Caco-2 (cell line): ENCODE measurements at regions of chrX and their contacts with region 1.

Region 1: GRCh38 chrX:128518508-128518907 is 466.3 kb upstream of the ACTRT1 start:
- DNase-seq: peak in 1 of 2 experiments; percentile 3
- H3K4me3 ChIP-seq: no peak overlapping the region
- H3K4me3 Mint-ChIP-seq: no peak overlapping the region
- H3K27ac Mint-ChIP-seq: no peak overlapping the region
- H3K4me1 ChIP-seq: no peaks in the 10 kb centered on the region
- H3K4me1 Mint-ChIP-seq: no peaks in the 10 kb centered on the region
- H3K27me3 ChIP-seq: no peaks in the 10 kb centered on the region
- H3K27me3 Mint-ChIP-seq: peaks cover 3% of the 10 kb centered on the region
- CTCF ChIP-seq: peak; percentile 26 to 30

Region 2: DNA sequence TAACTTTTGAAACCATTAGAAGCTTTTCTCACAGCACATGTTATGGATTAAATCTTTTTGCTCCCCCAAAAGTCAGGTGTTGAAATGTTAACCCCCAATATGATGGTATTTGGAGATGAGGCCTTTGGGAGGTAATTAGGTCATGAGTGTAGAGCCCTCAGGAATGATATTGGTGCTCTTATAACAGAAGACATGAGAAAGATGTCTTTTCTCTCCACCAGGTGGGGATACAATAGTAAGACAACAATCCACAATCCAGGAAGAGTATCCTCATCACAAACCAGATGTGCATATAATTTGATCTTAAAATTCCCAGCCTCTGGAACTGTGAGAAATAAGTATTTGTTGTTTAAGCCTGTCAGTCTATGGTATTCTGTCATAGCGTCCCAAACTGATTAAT is 266.9 kb before region 1 on chrX:
- CTCF ChIA-PET with region 1: no interaction called
- POLR2A ChIA-PET with region 1: no interaction called
- intact Hi-C with region 1: loop called (anchors 1 kb)
- DNase-seq: no peak
- H3K4me3 ChIP-seq: no peak overlapping the region
- H3K4me3 Mint-ChIP-seq: no peak overlapping the region
- H3K27ac Mint-ChIP-seq: no peak overlapping the region
- H3K4me1 ChIP-seq: no peaks in the 10 kb centered on the region
- H3K4me1 Mint-ChIP-seq: no peaks in the 10 kb centered on the region
- H3K27me3 ChIP-seq: no peaks in the 10 kb centered on the region
- H3K27me3 Mint-ChIP-seq: no peaks in the 10 kb centered on the region
- CTCF ChIP-seq: no peak

Region 3: GRCh38 chrX:128616933-128617332 is 98.4 kb after region 1 on chrX:
- CTCF ChIA-PET with region 1: no interaction called
- POLR2A ChIA-PET with region 1: no interaction called
- intact Hi-C with region 1: no loop called
- DNase-seq: no peak
- H3K4me3 ChIP-seq: no peak overlapping the region
- H3K4me3 Mint-ChIP-seq: no peak overlapping the region
- H3K27ac Mint-ChIP-seq: no peak overlapping the region
- H3K4me1 ChIP-seq: no peaks in the 10 kb centered on the region
- H3K4me1 Mint-ChIP-seq: no peaks in the 10 kb centered on the region
- H3K27me3 ChIP-seq: no peaks in the 10 kb centered on the region
- H3K27me3 Mint-ChIP-seq: no peaks in the 10 kb centered on the region
- CTCF ChIP-seq: no peak

Region 4: GRCh38 chrX:128653524-128653923 is 135.0 kb after region 1 on chrX:
- CTCF ChIA-PET with region 1: no interaction called
- POLR2A ChIA-PET with region 1: no interaction called
- intact Hi-C with region 1: no loop called
- DNase-seq: no peak
- H3K4me3 ChIP-seq: no peak overlapping the region
- H3K4me3 Mint-ChIP-seq: no peak overlapping the region
- H3K27ac Mint-ChIP-seq: no peak overlapping the region
- H3K4me1 ChIP-seq: no peaks in the 10 kb centered on the region
- H3K4me1 Mint-ChIP-seq: no peaks in the 10 kb centered on the region
- H3K27me3 ChIP-seq: no peaks in the 10 kb centered on the region
- H3K27me3 Mint-ChIP-seq: no peaks in the 10 kb centered on the region
- CTCF ChIP-seq: no peak